PC-3 (cell line): ENCODE measurements at regions of chr19 and their contacts with region 1.

Region 1: GRCh38 chr19:9801976-9802375 is 16.9 kb downstream of the FBXL12 start:
- DNase-seq: no peak
- ATAC-seq: no peak
- H3K4me3 ChIP-seq: no peak overlapping the region
- H3K27ac ChIP-seq: no peak overlapping the region
- H3K4me1 ChIP-seq: peaks cover 7% of the 10 kb centered on the region
- H3K27me3 ChIP-seq: no peaks in the 10 kb centered on the region
- CTCF ChIP-seq: no peak

Region 2: GRCh38 chr19:9757544-9758501 is 44.2 kb before region 1 on chr19:
- CTCF ChIA-PET with region 1: no interaction called
- POLR2A ChIA-PET with region 1: interaction called, 10 read pairs
- intact Hi-C with region 1: no loop called
- DNase-seq: no peak
- ATAC-seq: no peak
- H3K4me3 ChIP-seq: no peak overlapping the region
- H3K27ac ChIP-seq: no peak overlapping the region
- H3K4me1 ChIP-seq: no peaks in the 10 kb centered on the region
- H3K27me3 ChIP-seq: no peaks in the 10 kb centered on the region
- CTCF ChIP-seq: no peak

Region 3: DNA sequence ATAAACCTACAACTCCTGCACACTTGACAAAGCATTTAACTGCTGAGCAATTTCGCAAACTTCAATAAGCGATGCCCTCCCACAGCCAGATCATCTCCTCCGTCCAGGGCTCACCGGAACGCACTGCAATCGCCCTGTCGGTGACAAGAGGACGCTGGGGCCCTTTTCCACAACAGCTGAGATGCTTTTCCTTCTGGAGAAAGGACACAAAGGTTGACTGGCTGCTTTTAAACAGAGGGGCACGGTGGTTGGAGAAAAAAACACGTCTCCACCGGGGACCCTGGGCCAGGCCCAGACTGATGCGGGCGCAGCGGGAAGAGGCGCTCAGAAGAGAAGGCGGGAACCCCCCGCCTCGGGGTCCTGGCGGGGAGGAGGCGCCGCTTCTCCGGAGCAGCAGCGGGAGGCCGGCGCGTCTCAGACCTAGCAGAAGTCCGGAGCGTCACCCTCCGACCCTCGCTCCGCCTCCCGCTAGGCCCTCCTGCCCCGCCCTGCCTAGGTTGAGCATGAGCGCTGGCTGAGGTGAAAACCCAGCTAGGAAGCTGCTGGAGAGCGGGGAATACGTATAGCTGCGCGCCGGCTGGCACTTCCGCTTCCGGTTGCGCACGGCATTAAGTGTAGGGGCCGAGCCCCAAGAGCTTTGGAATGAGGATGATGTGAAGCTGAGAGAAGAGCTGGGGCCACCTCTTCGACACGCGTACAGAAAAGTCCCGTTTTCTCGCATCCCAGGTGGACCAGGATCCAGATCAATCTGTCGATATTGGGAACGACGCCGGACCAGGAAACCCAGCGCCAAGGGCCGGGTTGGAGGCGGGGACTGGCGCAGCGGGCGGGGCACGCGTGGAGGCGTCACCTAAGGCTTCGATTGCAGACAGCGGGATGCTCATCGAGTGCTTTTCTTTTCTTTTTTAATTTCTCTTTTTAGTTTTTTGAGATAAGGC is 33.5 kb before region 1 on chr19 and contains the start of gene ZNF846:
- CTCF ChIA-PET with region 1: interaction called, 13 read pairs
- POLR2A ChIA-PET with region 1: no interaction called
- intact Hi-C with region 1: no loop called
- DNase-seq: peak; percentile 99
- ATAC-seq: peak; percentile 99
- H3K4me3 ChIP-seq: peak within 1 kb of the TSS; percentile 93
- H3K27ac ChIP-seq: peak within 1 kb of the TSS; percentile 85
- H3K4me1 ChIP-seq: peaks cover 7% of the 10 kb centered on the region; the same call in 1 of the 2 replicates
- H3K27me3 ChIP-seq: no peaks in the 10 kb centered on the region
- CTCF ChIP-seq: no peak
- total RNA-seq, gene ZNF846: 10.9 and 15.7 TPM in 2 replicates

Region 4: DNA sequence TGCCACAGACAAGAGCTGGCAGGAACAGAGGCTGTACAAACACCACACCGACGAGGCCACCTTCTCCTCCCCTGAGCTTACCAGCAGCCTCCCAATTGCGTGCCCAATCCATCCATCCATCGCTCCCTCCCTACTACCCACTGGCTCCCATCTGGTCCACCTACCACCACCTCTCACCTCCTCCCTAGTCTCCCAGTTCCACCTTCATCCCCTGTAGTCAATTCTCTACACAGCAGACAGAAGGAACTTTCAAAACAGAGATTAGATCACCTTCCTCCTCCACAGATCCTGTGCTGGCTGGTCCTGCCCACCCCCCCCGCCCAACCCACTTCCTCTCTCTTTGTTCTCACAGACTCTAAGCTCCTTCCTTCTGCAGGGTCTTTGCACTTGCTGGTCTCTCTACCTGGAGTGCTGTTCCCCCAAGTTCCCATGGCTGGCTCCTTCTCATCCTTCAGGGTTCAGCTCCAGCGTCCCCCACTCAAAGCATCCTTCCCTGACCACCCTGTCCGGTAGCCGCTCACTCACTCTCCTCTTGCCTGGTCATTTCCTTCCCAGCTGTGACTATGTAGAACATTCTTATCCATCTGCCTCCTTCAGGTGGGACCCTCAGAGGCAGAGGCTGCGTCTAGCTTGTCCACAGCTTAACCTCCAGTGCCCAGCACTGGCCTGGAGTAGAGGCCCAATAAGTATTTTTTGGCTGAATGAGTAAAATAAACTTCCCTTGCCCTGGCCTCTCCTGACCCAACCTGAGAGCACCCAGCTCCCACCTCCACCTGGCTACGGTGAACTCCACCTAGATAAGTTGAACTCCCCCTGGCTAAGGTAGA is 56.2 kb after region 1 on chr19:
- CTCF ChIA-PET with region 1: no interaction called
- POLR2A ChIA-PET with region 1: no interaction called
- intact Hi-C with region 1: no loop called
- DNase-seq: no peak
- ATAC-seq: no peak
- H3K4me3 ChIP-seq: no peak overlapping the region
- H3K27ac ChIP-seq: no peak overlapping the region
- H3K4me1 ChIP-seq: no peaks in the 10 kb centered on the region
- H3K27me3 ChIP-seq: no peaks in the 10 kb centered on the region
- CTCF ChIP-seq: no peak